Common myeloid progenitor, CD34-positive (primary cell): ENCODE measurements at regions of chr10 and their contacts with region 1.

Region 1: DNA sequence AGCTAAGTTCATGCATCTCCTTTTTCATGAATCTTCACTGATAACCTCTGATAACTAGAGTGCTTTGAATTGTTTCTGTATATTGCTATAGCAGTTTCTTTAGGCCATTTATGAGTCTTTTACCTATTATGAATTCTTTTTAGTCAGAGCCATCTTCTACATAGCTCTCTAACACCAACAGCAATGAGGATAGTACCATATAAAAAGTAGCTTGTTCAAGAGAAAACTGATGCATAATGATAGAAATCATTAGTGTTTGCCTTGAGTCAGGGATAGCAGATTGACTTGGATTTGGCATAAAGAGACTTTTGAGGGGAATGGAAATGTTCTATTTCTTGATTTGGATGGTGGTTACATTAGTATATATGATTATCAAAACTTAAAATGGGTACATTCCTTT is 25.8 kb upstream of the SEMA4G start:
- DNase-seq: no peak
- H3K4me3 ChIP-seq: no peak overlapping the region
- H3K27ac ChIP-seq: no peak overlapping the region
- H3K4me1 ChIP-seq: no peaks in the 10 kb centered on the region
- H3K27me3 ChIP-seq: no peaks in the 10 kb centered on the region

Region 2: DNA sequence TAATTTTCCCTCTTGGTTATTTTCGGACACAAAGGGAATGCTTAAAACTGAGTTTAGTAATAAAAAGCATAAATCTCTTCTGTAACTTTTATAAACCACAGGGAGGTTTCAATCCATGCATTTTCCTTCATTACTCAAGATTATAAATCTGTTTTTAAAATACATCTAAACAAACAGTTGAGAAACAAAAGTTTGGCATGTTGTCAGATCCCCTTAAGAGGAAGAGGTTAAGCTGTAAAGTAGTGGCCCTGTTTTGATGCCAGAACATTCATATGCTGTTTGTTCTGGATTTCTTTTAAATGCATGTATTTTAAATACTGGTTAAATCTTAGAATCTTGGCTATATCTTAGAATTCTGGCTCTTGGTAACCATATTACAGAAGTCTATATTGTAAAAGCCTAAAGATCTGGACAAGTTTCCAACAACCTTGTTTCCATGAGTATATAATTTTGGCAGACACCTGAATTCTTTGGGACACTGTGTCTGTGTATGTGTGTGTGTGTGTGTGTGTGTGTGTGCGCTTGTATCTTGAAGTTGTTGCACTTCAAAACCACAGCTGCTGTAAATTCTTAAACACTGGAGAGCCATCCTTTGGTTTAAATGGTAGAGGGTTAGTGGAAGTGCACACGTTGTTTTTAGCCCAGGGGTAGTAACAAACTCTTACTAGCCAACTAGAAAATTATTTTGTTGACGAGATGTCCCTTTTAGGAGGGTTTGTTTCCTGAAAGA is 19.0 kb after region 1 on chr10:
- CTCF ChIA-PET with region 1: interaction called, 13 read pairs
- POLR2A ChIA-PET with region 1: interaction called, 3 read pairs
- DNase-seq: no peak
- H3K4me3 ChIP-seq: no peak overlapping the region
- H3K27ac ChIP-seq: no peak overlapping the region
- H3K4me1 ChIP-seq: peaks cover 0 to 4% (median 0%) of the 10 kb centered on the region in 4 experiments
- H3K27me3 ChIP-seq: no peaks in the 10 kb centered on the region